Calu3 (cell line): ENCODE measurements at regions of chr7 and their contacts with region 1.

Region 1: GRCh38 chr7:134432296-134433152 is 26.4 kb downstream of the AKR1B1 start:
- DNase-seq: peak; percentile 84
- H3K4me3 Mint-ChIP-seq: peak overlapping the region; percentile 72
- H3K27ac Mint-ChIP-seq: peak overlapping the region; percentile 43
- H3K4me1 Mint-ChIP-seq: peaks cover 12% of the 10 kb centered on the region
- H3K27me3 Mint-ChIP-seq: no peaks in the 10 kb centered on the region
- CTCF ChIP-seq: peak; percentile 86

Region 2: GRCh38 chr7:134444198-134444871 is 11.8 kb after region 1 on chr7:
- CTCF ChIA-PET with region 1: interaction called, 22 read pairs
- intact Hi-C with region 1: no loop called
- DNase-seq: no peak
- H3K4me3 Mint-ChIP-seq: no peak overlapping the region
- H3K27ac Mint-ChIP-seq: no peak overlapping the region
- H3K4me1 Mint-ChIP-seq: peaks cover 17% of the 10 kb centered on the region
- H3K27me3 Mint-ChIP-seq: no peaks in the 10 kb centered on the region
- CTCF ChIP-seq: no peak

Region 3: GRCh38 chr7:134480736-134481135 is 48.2 kb after region 1 on chr7:
- CTCF ChIA-PET with region 1: interaction called, 20 read pairs
- intact Hi-C with region 1: no loop called
- DNase-seq: peak; percentile 49
- H3K4me3 Mint-ChIP-seq: no peak overlapping the region
- H3K27ac Mint-ChIP-seq: peak overlapping the region; percentile 39
- H3K4me1 Mint-ChIP-seq: peaks cover 45% of the 10 kb centered on the region
- H3K27me3 Mint-ChIP-seq: no peaks in the 10 kb centered on the region
- CTCF ChIP-seq: no peak

Region 4: DNA sequence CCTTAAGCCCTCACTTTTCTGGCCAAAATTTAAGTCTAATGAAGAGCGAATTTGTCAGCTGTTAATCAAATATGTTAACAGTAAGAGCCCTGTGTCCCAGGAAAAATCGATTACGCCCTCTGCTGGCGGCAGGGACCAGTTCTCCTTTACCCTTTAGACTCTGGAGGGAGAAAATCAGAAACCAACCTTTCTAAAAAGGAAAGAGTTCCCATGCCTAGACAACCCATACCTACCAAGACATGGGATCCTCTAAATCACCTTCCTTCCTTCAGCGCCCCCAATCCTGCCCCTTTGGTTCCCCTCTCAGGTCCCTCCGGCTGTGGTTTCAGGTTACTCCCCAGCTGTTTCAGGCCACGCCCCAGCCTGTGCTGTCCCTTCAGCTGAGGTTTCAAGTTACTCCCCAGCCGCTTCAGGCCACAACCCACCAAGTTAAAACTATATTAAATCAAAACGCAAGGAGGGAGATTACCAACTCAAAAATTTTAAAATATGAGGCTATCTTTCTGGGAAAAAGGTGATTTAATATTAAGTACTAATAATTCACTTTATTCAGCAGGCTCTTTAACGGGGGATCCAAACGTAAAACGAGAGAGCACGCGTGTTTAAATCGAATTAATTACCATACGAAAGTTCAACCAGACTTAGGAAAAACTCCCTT is 115.0 kb after region 1 on chr7:
- CTCF ChIA-PET with region 1: interaction called, 21 read pairs
- intact Hi-C with region 1: no loop called
- DNase-seq: peak; percentile 83
- H3K4me3 Mint-ChIP-seq: peak overlapping the region; percentile 64
- H3K27ac Mint-ChIP-seq: peak overlapping the region; percentile 54
- H3K4me1 Mint-ChIP-seq: peaks cover 24% of the 10 kb centered on the region
- H3K27me3 Mint-ChIP-seq: no peaks in the 10 kb centered on the region
- CTCF ChIP-seq: peak; percentile 92

Region 5: DNA sequence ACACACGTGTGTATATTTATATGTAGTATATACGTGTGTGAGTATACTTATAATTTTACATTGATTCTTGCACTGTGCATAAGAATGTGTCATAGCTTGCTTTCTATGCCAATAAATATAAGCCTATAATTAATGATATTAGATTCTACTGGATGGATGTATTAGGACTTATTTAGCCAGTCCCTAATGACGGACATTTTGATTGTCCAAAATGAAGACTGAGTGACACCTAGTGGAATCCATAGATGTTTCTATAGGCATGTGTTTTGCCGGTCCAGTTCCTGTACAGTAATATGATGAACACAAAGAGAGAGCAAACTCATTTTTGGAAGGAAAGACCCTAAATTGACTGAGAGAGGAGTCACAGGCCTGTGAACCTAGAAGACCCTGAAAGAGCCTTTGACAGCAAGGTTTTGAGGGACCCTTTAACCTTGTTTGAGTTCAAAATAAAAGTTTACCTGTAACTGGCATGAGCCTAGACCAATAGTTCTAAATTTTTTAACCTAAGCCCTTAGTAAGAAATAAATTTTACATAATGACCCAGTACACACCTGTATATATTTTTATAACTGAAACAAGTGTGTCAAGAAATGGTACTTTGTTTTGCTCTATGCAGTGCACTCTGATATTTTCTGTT is 511.4 kb after region 1 on chr7:
- CTCF ChIA-PET with region 1: no interaction called
- intact Hi-C with region 1: loop called (anchors 10 kb)
- DNase-seq: peak; percentile 13
- H3K4me3 Mint-ChIP-seq: no peak overlapping the region
- H3K27ac Mint-ChIP-seq: no peak overlapping the region
- H3K4me1 Mint-ChIP-seq: peaks cover 16% of the 10 kb centered on the region
- H3K27me3 Mint-ChIP-seq: no peaks in the 10 kb centered on the region
- CTCF ChIP-seq: no peak